ENCODE measurements at regions of chr17 and their contacts with region 1.

Region 1: GRCh38 chr17:5297245-5297644 is 15.2 kb downstream of the RABEP1 start:
- DNase-seq: no peak
- ATAC-seq: peak; percentile 42
- H3K4me3 ChIP-seq: no peak overlapping the region
- H3K27ac ChIP-seq: no peak overlapping the region
- H3K4me1 ChIP-seq: peaks cover 16% of the 10 kb centered on the region
- H3K27me3 ChIP-seq: no peaks in the 10 kb centered on the region
- CTCF ChIP-seq: peak; percentile 9 to 41 (median 9); a peak in 4 of 6 replicates
- EP300 ChIP-seq: no peak
- POLR2A ChIP-seq: no peak
- RAD21 ChIP-seq: peak; percentile 45

Region 2: DNA sequence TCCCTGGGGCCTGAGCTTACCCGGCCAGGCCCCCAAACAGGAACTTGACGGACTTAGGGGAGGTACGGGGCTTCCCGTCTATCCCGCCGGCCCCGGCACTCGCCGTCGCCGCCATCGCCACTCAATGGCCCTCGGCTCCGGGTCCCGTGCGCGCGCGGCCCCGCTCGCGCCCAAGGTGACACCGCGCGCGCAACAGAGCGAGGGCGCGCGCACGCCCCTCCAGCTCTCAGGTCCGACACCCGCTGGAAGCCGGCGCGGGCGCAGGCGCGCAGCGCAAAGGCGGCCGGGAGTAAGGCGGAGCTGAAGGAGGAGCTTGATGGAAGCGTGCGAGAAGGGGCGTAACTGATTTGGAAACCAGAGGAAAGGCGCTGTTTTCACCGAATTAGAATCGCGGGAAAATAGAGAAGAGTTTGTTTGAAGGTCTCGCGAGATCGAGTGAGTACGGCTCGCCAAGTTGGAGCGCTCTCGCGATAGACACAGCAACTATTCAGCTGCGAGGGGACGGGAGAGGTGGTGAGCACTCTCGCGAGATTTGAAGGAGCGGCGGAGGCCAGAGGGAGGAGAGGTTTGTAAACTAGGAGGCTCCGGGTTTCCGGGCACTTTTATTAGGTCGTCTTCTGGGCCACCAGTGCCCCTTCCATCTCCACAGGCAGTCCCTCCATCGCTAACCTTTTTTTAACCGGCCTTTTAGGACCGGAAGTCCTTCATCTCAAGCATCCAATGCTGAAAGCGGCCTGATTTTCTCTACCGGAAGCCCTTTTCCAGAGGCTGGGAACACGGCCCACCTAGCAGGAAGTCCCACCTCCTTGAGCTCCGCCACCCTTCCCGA is 357.2 kb before region 1 on chr17 and contains the starts of genes RNF167 and SLC25A11:
- CTCF ChIA-PET with region 1: no interaction called
- POLR2A ChIA-PET with region 1: no interaction called
- RAD21 ChIA-PET with region 1: no interaction called
- SMC1A ChIA-PET with region 1: no interaction called
- in situ Hi-C with region 1: no loop called
- intact Hi-C with region 1: no loop called
- DNase-seq: peak; percentile 100
- ATAC-seq: peak; percentile 83
- H3K4me3 ChIP-seq: peak within 1 kb of the TSS; percentile 92
- H3K27ac ChIP-seq: peak within 1 kb of the TSS; percentile 97
- H3K4me1 ChIP-seq: peaks cover 41% of the 10 kb centered on the region
- H3K27me3 ChIP-seq: no peaks in the 10 kb centered on the region
- CTCF ChIP-seq: no peak
- EP300 ChIP-seq: no peak
- POLR2A ChIP-seq: peak; percentile 88
- RAD21 ChIP-seq: no peak
- polyA plus RNA-seq, gene RNF167: 33.6 to 35.3 TPM
- polyA plus RNA-seq, gene SLC25A11: 5.8 to 10.9 TPM

Region 3: GRCh38 chr17:5281814-5282653 is 15.2 kb before region 1 on chr17 and contains the start of gene RABEP1:
- CTCF ChIA-PET with region 1: interaction called, 26 read pairs
- POLR2A ChIA-PET with region 1: interaction called, 45 read pairs
- RAD21 ChIA-PET with region 1: interaction called, 5 read pairs
- SMC1A ChIA-PET with region 1: interaction called, 65 read pairs
- in situ Hi-C with region 1: no loop called
- intact Hi-C with region 1: no loop called
- DNase-seq: peak; percentile 46
- ATAC-seq: peak; percentile 80
- H3K4me3 ChIP-seq: peak within 1 kb of the TSS; percentile 79
- H3K27ac ChIP-seq: peak within 1 kb of the TSS; percentile 78
- H3K4me1 ChIP-seq: peaks cover 14% of the 10 kb centered on the region
- H3K27me3 ChIP-seq: no peaks in the 10 kb centered on the region
- CTCF ChIP-seq: peak in 2 of 3 experiments; percentile 11 to 27; a peak in 2 of 6 replicates
- EP300 ChIP-seq: no peak
- POLR2A ChIP-seq: peak; percentile 97
- RAD21 ChIP-seq: no peak
- polyA plus RNA-seq, gene RABEP1: 13.4 to 20.2 TPM

Region 4: GRCh38 chr17:5309851-5310250 is 12.6 kb after region 1 on chr17:
- CTCF ChIA-PET with region 1: interaction called, 54 read pairs
- POLR2A ChIA-PET with region 1: interaction called, 7 read pairs
- RAD21 ChIA-PET with region 1: interaction called, 41 read pairs
- SMC1A ChIA-PET with region 1: interaction called, 46 read pairs
- in situ Hi-C with region 1: no loop called
- intact Hi-C with region 1: no loop called
- DNase-seq: no peak
- ATAC-seq: no peak
- H3K4me3 ChIP-seq: no peak overlapping the region
- H3K27ac ChIP-seq: no peak overlapping the region
- H3K4me1 ChIP-seq: peaks cover 23% of the 10 kb centered on the region
- H3K27me3 ChIP-seq: no peaks in the 10 kb centered on the region
- CTCF ChIP-seq: no peak
- EP300 ChIP-seq: no peak
- POLR2A ChIP-seq: no peak
- RAD21 ChIP-seq: no peak

Measured in GM12878 (cell line).